OCI-LY7 (cell line): ENCODE measurements at regions of chr10 and their contacts with region 1.

Region 1: DNA sequence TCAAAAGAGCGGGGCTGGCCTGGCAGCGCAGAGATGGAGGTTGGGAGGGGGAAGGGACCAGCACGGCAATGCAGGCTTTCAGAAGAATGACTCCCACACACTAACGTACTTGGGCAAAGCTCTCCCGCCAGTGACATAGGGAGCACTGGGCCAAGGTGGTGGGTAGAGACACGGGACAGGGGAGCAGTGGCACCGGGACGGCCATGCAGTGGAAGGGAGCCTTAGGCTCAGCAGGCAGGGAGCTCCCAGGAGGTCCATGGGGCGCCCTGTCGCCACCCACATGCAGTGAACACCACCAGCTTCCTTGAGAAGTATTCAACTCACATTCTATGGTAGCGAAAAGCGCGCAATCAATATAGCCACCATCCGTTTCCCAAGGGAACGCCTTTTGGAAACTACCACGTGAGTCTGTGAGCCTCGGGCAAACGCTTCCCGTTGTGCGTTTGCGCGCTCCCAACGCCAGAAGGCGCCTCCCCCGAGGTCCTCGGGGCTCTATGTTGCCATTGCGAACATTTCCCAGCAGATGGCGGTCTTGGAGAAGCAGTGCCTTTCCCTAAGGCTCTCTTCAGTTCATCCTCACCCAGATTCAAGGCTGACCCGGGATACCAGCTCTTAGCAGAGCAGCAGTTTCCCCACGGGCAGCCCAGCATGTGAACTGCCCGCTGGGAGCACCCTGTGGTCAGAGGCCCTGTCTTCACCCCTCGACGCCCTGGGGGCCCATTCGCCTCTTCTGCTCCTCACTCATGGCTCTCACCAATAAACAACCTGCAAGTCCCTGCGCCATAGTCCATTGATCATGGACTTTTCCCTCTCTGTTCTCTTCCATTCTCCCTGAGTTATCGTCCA is 16.4 kb upstream of the OPALIN start:
- DNase-seq: peak; percentile 88
- H3K4me3 ChIP-seq: peak overlapping the region; percentile 63
- H3K27ac ChIP-seq: no peak overlapping the region
- H3K4me1 ChIP-seq: peaks cover 6% of the 10 kb centered on the region
- CTCF ChIP-seq: peak; percentile 94

Region 2: GRCh38 chr10:95480901-95481491 is 894.2 kb before region 1 on chr10:
- CTCF ChIA-PET with region 1: interaction called, 14 read pairs
- POLR2A ChIA-PET with region 1: no interaction called
- intact Hi-C with region 1: no loop called
- DNase-seq: no peak
- H3K4me3 ChIP-seq: no peak overlapping the region
- H3K27ac ChIP-seq: no peak overlapping the region
- H3K4me1 ChIP-seq: no peaks in the 10 kb centered on the region
- CTCF ChIP-seq: no peak